ENCODE measurements at regions of chr1 and their contacts with region 1.

Region 1: GRCh38 chr1:222204475-222204874 is 343.4 kb downstream of the HHIPL2 start:
- DNase-seq: no peak
- H3K4me3 ChIP-seq: no peak overlapping the region
- H3K27ac ChIP-seq: no peak overlapping the region
- H3K4me1 ChIP-seq: no peaks in the 10 kb centered on the region
- H3K27me3 ChIP-seq: no peaks in the 10 kb centered on the region
- CTCF ChIP-seq: no peak

Region 2: DNA sequence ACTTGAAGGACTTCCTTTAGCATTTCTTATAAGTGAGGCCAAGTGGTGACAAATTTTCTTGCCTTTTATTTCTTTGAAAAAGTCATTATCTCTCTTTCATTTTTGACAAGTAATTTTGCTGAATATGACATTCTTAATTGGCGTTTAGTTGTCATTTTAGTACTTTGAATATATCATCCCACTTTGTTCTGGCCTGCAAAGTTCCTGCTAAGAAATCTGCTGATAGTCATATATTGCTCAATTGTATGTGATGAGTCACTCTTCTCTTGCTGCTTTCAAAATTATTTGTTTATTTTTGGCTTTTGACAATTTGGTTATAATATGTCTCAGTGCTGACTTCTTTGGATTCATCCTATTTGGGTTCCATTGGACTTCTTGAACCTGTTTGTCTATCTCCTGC is 775.2 kb before region 1 on chr1:
- CTCF ChIA-PET with region 1: no interaction called
- POLR2A ChIA-PET with region 1: interaction called, 12 read pairs
- intact Hi-C with region 1: no loop called
- DNase-seq: peak in 1 of 2 experiments; percentile 52
- H3K4me3 ChIP-seq: no peak overlapping the region
- H3K27ac ChIP-seq: no peak overlapping the region
- H3K4me1 ChIP-seq: peaks cover 9% of the 10 kb centered on the region
- H3K27me3 ChIP-seq: no peaks in the 10 kb centered on the region
- CTCF ChIP-seq: no peak

Region 3: GRCh38 chr1:221897321-221897721 is 307.2 kb before region 1 on chr1:
- CTCF ChIA-PET with region 1: no interaction called
- POLR2A ChIA-PET with region 1: interaction called, 14 read pairs
- intact Hi-C with region 1: no loop called
- DNase-seq: peak in 1 of 2 experiments; percentile 68
- H3K4me3 ChIP-seq: no peak overlapping the region
- H3K27ac ChIP-seq: no peak overlapping the region
- H3K4me1 ChIP-seq: peaks cover 19% of the 10 kb centered on the region
- H3K27me3 ChIP-seq: no peaks in the 10 kb centered on the region
- CTCF ChIP-seq: no peak